Activated naive CD4-positive, alpha-beta T cell treated with anti-CD3 and anti-CD28 coated beads for 36 hours (primary cell): ENCODE measurements at regions of chr7 and their contacts with region 1.

Region 1: DNA sequence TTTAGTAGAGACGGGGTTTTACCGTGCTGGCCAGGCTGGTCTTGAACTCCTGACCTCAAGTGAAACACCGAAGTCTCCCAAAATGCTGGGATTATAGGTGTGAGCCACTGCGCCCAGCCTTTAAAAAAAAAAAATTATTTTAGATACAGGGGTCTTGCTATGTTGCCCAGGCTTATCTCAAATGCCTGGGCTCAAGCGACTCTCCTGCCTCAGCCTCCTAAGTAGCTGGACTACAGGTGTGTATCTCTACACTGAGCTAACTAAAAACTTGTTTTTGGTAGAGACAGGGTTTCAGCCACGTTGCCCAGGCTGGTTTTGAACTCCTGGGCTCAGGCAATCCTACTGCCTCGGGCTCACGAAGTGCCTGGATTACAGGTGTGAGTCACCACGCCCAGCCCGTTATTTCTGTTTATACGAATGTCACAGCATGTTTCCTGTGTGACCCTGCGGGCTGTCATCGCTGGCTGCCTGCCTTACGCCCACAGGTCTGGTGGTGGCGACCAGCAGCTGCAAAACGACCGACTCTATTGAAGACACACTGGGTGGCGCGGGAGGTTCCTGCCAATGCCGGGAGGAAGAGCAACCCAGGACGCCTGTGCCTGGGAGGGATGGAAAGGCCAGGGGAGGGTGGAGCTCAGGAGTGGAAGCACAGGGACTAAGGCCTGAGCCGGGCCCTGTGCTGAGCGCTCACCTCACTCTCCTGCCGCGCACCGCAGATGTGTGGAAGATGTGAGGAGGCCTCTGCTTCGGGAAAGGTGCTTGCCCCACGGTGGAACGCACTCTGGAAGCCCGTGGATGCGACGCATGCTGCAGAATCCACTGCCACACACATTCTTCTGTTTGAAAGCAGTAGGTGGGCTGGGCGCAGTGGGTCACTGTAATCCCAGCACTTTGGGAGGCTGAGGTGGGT is 32.8 kb downstream of the AMZ1 start:
- DNase-seq: peak; percentile 95
- H3K4me3 Mint-ChIP-seq: no peak overlapping the region
- H3K27ac Mint-ChIP-seq: peak overlapping the region; percentile 13
- H3K4me1 Mint-ChIP-seq: peaks cover 47% of the 10 kb centered on the region
- H3K27me3 Mint-ChIP-seq: peaks cover 1% of the 10 kb centered on the region

Region 2: GRCh38 chr7:2508327-2509215 is 212.3 kb before region 1 on chr7:
- CTCF ChIA-PET with region 1: no interaction called
- intact Hi-C with region 1: loop called (anchors 5 kb)
- DNase-seq: peak; percentile 83
- H3K4me3 Mint-ChIP-seq: peak overlapping the region; percentile 59
- H3K27ac Mint-ChIP-seq: peak overlapping the region; percentile 37
- H3K4me1 Mint-ChIP-seq: peaks cover 55% of the 10 kb centered on the region
- H3K27me3 Mint-ChIP-seq: no peaks in the 10 kb centered on the region

Region 3: GRCh38 chr7:2709553-2710285 is 11.1 kb before region 1 on chr7:
- CTCF ChIA-PET with region 1: interaction called, 42 read pairs
- intact Hi-C with region 1: no loop called
- DNase-seq: peak; percentile 84
- H3K4me3 Mint-ChIP-seq: peak overlapping the region; percentile 57
- H3K27ac Mint-ChIP-seq: peak overlapping the region; percentile 63
- H3K4me1 Mint-ChIP-seq: peaks cover 26% of the 10 kb centered on the region
- H3K27me3 Mint-ChIP-seq: peaks cover under 1% of the 10 kb centered on the region

Region 4: GRCh38 chr7:2773601-2774000 is 52.8 kb after region 1 on chr7:
- CTCF ChIA-PET with region 1: no interaction called
- intact Hi-C with region 1: loop called (anchors 2 kb)
- DNase-seq: no peak
- H3K4me3 Mint-ChIP-seq: no peak overlapping the region
- H3K27ac Mint-ChIP-seq: no peak overlapping the region
- H3K4me1 Mint-ChIP-seq: peaks cover 34% of the 10 kb centered on the region
- H3K27me3 Mint-ChIP-seq: no peaks in the 10 kb centered on the region

Region 5: GRCh38 chr7:2781636-2782035 is 60.8 kb after region 1 on chr7:
- CTCF ChIA-PET with region 1: interaction called, 8 read pairs
- intact Hi-C with region 1: loop called (anchors 2 kb)
- DNase-seq: no peak
- H3K4me3 Mint-ChIP-seq: no peak overlapping the region
- H3K27ac Mint-ChIP-seq: peak overlapping the region; percentile 46
- H3K4me1 Mint-ChIP-seq: peaks cover 27% of the 10 kb centered on the region
- H3K27me3 Mint-ChIP-seq: no peaks in the 10 kb centered on the region

Region 6: DNA sequence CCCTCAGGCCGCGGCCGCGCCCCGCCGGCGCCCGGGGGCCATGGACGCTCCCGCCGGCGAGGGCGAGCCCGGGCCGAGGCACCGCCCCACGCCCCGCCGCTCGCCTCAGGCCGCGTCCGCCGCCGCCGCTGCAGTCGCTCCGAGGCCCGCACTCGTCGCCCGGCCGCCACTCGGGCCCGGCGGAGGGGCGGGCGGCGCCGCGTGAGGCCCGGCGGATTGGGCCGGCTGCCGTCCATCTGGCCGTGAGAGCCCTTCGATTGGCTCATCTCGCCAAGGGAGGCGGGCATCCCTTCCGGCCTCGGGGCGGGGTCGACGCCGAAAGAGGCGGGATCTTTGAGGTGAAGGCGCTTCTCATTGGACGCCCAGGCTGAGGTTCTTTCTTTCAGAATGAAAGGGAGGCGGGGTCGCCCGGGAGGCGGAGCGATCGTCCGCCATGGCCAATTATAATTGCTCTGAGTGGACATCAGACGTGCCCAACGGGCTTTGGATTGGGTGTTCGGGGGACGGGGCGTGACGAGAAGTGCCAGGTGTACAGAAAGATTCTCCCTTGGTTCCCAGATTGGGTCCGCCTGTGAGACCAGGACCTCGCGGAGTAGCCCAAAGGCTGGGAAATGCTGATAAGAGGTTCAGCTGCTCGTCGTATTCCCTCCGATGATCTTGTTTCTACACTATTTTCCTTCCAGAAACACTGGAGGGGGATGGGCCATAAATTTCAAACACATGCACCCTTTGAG is 123.5 kb after region 1 on chr7 and contains the start of gene GNA12:
- CTCF ChIA-PET with region 1: interaction called, 3 read pairs
- intact Hi-C with region 1: loop called (anchors 2 kb)
- DNase-seq: peak; percentile 99
- H3K4me3 Mint-ChIP-seq: peak within 1 kb of the TSS; percentile 79
- H3K27ac Mint-ChIP-seq: peak within 1 kb of the TSS; percentile 70
- H3K4me1 Mint-ChIP-seq: peaks cover 33% of the 10 kb centered on the region
- H3K27me3 Mint-ChIP-seq: no peaks in the 10 kb centered on the region
- total RNA-seq, gene GNA12: 14.1 to 15.0 TPM

Region 7: GRCh38 chr7:3154912-3155494 is 434.2 kb after region 1 on chr7:
- CTCF ChIA-PET with region 1: no interaction called
- intact Hi-C with region 1: loop called (anchors 10 kb)
- DNase-seq: peak; percentile 82
- H3K4me3 Mint-ChIP-seq: no peak overlapping the region
- H3K27ac Mint-ChIP-seq: no peak overlapping the region
- H3K4me1 Mint-ChIP-seq: peaks cover 20% of the 10 kb centered on the region
- H3K27me3 Mint-ChIP-seq: no peaks in the 10 kb centered on the region